ENCODE measurements at regions of chr3 and their contacts with region 1.

Region 1: GRCh38 chr3:157081681-157082210 is 78.2 kb downstream of the CCNL1 start:
- DNase-seq: no peak
- ATAC-seq: peak; percentile 95
- H3K4me3 ChIP-seq: no peak overlapping the region
- H3K27ac ChIP-seq: no peak overlapping the region
- H3K4me1 ChIP-seq: peaks cover 14% of the 10 kb centered on the region
- H3K27me3 ChIP-seq: no peaks in the 10 kb centered on the region
- CTCF ChIP-seq: peak; percentile 95
- EP300 ChIP-seq: no peak
- POLR2A ChIP-seq: no peak
- RAD21 ChIP-seq: peak; percentile 100

Region 2: GRCh38 chr3:156554842-156555687 is 526.7 kb before region 1 on chr3 and contains the start of gene SSR3:
- CTCF ChIA-PET with region 1: interaction called, 8 read pairs
- POLR2A ChIA-PET with region 1: no interaction called
- RAD21 ChIA-PET with region 1: interaction called, 5 read pairs
- SMC1A ChIA-PET with region 1: interaction called, 16 read pairs
- in situ Hi-C with region 1: no loop called
- intact Hi-C with region 1: loop called (anchors 5 kb)
- DNase-seq: peak; percentile 95
- ATAC-seq: peak; percentile 99
- H3K4me3 ChIP-seq: peak within 1 kb of the TSS; percentile 92
- H3K27ac ChIP-seq: peak within 1 kb of the TSS; percentile 83
- H3K4me1 ChIP-seq: peaks cover 2% of the 10 kb centered on the region; the same call in 1 of the 2 replicates
- H3K27me3 ChIP-seq: no peaks in the 10 kb centered on the region
- CTCF ChIP-seq: peak in 1 of 3 experiments; percentile 2; a peak in 1 of 6 replicates
- EP300 ChIP-seq: no peak; a peak in 1 of 4 replicates
- POLR2A ChIP-seq: peak; percentile 95
- RAD21 ChIP-seq: no peak
- polyA plus RNA-seq, gene SSR3: 278 to 345 TPM

Region 3: GRCh38 chr3:156702367-156702766 is 379.4 kb before region 1 on chr3:
- CTCF ChIA-PET with region 1: interaction called, 10 read pairs
- POLR2A ChIA-PET with region 1: no interaction called
- RAD21 ChIA-PET with region 1: interaction called, 3 read pairs
- SMC1A ChIA-PET with region 1: interaction called, 3 read pairs
- in situ Hi-C with region 1: no loop called
- intact Hi-C with region 1: no loop called
- DNase-seq: no peak
- ATAC-seq: no peak
- H3K4me3 ChIP-seq: no peak overlapping the region
- H3K27ac ChIP-seq: no peak overlapping the region
- H3K4me1 ChIP-seq: peaks cover 10% of the 10 kb centered on the region; the same call in 1 of the 2 replicates
- H3K27me3 ChIP-seq: no peaks in the 10 kb centered on the region
- CTCF ChIP-seq: no peak
- EP300 ChIP-seq: no peak
- POLR2A ChIP-seq: no peak
- RAD21 ChIP-seq: no peak

Region 4: DNA sequence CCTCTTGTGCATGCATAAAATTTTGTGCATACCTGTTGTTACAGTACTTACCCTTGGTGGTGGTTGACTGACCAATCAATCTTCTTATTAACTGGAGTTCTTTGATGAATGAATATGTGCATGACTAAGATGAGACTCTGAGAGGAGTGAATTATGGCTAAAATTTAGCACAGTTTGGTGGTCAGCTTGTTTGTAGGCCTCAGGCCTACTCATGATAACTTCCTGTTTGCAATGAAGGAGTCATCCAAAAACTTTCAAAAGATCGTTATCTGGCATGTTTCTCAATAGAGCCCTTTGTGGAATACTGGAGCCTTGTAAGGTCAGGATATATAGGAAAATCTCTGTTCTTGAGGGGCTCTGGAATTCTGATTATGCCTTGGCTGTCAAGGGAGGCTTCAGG is 189.0 kb before region 1 on chr3:
- CTCF ChIA-PET with region 1: interaction called, 6 read pairs
- POLR2A ChIA-PET with region 1: no interaction called
- RAD21 ChIA-PET with region 1: interaction called, 6 read pairs
- SMC1A ChIA-PET with region 1: interaction called, 4 read pairs
- in situ Hi-C with region 1: no loop called
- intact Hi-C with region 1: loop called (anchors 5 kb)
- DNase-seq: no peak
- ATAC-seq: no peak
- H3K4me3 ChIP-seq: no peak overlapping the region
- H3K27ac ChIP-seq: no peak overlapping the region
- H3K4me1 ChIP-seq: no peaks in the 10 kb centered on the region
- H3K27me3 ChIP-seq: no peaks in the 10 kb centered on the region
- CTCF ChIP-seq: no peak
- EP300 ChIP-seq: no peak
- POLR2A ChIP-seq: no peak
- RAD21 ChIP-seq: no peak

Region 5: DNA sequence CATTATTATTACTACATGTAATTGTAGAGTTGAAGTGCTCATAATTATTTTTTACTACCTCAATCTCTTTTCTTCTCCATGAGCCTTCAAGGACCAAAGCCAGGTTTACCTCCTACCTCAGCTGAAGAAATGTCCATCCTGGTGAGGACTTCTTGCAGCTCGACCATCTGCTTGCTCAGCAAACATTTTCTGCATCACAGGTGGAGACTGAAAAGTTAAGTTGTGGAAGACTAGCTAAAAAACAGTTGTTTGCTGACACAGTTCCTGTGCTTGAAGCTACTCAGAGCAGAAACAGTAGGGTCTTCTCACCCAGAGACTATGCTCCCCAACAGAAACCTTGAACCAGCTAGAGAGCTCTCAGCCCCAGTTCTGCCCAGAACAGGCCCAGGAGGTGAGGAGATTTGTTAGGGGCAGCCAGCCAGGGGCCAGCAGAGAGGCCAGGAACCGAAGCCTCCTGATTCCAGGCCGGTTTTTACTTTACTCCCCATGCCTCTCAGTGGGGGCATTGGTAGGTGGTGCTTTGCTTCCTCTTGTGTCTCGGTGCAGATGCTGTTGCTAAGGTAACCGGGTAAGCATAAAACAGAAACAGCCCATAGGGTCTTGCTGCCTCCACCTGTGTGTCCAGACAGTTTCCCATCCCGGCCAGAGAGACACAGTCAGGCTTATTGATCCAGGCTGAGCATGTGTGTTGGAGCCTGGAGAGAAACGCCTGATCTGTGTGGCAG is 23.3 kb after region 1 on chr3:
- CTCF ChIA-PET with region 1: interaction called, 144 read pairs
- POLR2A ChIA-PET with region 1: interaction called, 3 read pairs
- RAD21 ChIA-PET with region 1: interaction called, 119 read pairs
- SMC1A ChIA-PET with region 1: interaction called, 234 read pairs
- in situ Hi-C with region 1: no loop called
- intact Hi-C with region 1: no loop called
- DNase-seq: no peak
- ATAC-seq: peak; percentile 71
- H3K4me3 ChIP-seq: no peak overlapping the region
- H3K27ac ChIP-seq: peak overlapping the region; percentile 63; the same call in 1 of the 2 replicates
- H3K4me1 ChIP-seq: peaks cover 31% of the 10 kb centered on the region
- H3K27me3 ChIP-seq: no peaks in the 10 kb centered on the region
- CTCF ChIP-seq: no peak
- EP300 ChIP-seq: no peak
- POLR2A ChIP-seq: no peak
- RAD21 ChIP-seq: no peak

Region 6: DNA sequence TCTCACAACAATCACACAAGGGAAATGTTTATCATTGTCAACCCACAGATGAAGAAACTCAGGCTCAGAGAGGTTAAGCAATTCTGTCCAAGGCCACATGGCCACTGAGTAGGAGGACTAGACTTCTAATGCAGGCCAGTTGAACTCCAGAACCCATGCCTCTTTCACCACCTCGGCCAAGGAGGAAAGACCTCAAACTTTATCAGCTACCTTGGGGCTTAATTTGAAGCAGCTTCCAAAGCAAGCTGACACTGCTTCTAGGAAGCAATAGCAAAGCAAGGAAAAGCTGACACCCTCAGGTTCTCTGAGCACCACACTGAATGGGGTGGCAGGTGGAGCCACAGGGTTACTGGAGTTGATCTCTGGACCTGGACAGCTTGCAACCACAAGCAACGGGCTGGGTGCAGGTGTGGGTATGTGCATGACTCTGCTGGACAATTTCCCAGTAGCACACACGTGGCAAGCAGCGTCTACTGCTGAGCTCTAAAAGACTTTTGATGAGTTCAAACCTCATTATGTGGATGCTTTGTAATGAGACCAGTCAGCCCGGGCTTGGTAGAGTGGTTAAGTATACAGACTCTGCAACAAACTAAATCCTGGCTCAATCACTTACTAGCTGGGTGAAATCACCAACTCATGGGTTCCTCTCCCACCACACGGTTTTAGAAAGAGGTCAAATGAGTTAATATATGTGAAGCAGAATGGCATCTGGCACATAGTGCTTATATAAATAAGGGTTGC is 55.1 kb after region 1 on chr3:
- CTCF ChIA-PET with region 1: interaction called, 939 read pairs
- POLR2A ChIA-PET with region 1: interaction called, 3 read pairs
- RAD21 ChIA-PET with region 1: interaction called, 153 read pairs
- SMC1A ChIA-PET with region 1: interaction called, 98 read pairs
- in situ Hi-C with region 1: no loop called
- intact Hi-C with region 1: loop called (anchors 1 kb)
- DNase-seq: no peak
- ATAC-seq: no peak; the same call in 1 of the 3 replicates
- H3K4me3 ChIP-seq: no peak overlapping the region
- H3K27ac ChIP-seq: no peak overlapping the region
- H3K4me1 ChIP-seq: peaks cover 10% of the 10 kb centered on the region
- H3K27me3 ChIP-seq: no peaks in the 10 kb centered on the region
- CTCF ChIP-seq: no peak
- EP300 ChIP-seq: no peak
- POLR2A ChIP-seq: no peak
- RAD21 ChIP-seq: no peak